PC-3 (cell line): ENCODE measurements at regions of chr1 and their contacts with region 1.

Region 1: GRCh38 chr1:150925816-150926741 is at the start of gene SETDB1:
- DNase-seq: peak; percentile 99
- ATAC-seq: peak; percentile 90
- H3K4me3 ChIP-seq: peak within 1 kb of the TSS; percentile 81
- H3K27ac ChIP-seq: peak within 1 kb of the TSS; percentile 71
- H3K4me1 ChIP-seq: peaks cover 15% of the 10 kb centered on the region
- H3K27me3 ChIP-seq: no peaks in the 10 kb centered on the region
- CTCF ChIP-seq: no peak
- total RNA-seq, gene SETDB1: 35.4 and 42.4 TPM in 2 replicates

Region 2: GRCh38 chr1:150561974-150562445 is 364.1 kb before region 1 on chr1:
- CTCF ChIA-PET with region 1: interaction called, 5 read pairs
- POLR2A ChIA-PET with region 1: interaction called, 3 read pairs
- intact Hi-C with region 1: loop called (anchors 5 kb)
- DNase-seq: peak; percentile 91
- ATAC-seq: peak; percentile 68
- H3K4me3 ChIP-seq: peak overlapping the region; percentile 69
- H3K27ac ChIP-seq: peak overlapping the region; percentile 96
- H3K4me1 ChIP-seq: peaks cover 37% of the 10 kb centered on the region
- H3K27me3 ChIP-seq: no peaks in the 10 kb centered on the region
- CTCF ChIP-seq: no peak

Region 3: DNA sequence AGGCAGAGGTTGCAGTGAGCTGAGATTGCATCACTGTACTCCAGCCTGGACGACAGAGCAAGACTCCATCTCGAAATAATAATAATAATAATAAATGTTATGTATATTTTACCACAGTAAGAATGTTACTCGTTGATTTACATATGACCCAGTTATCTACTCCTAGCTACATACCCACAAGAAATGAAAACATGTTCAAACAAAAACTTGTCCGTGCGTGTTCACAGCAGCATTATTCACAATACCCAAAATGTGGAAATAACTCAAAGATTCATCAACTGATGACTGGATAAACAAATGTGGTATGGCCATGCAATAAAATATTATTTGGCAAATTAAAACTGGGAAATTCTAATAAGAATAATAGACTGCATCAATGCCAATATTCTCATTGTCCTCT is 264.9 kb before region 1 on chr1:
- CTCF ChIA-PET with region 1: no interaction called
- POLR2A ChIA-PET with region 1: interaction called, 16 read pairs
- intact Hi-C with region 1: no loop called
- DNase-seq: no peak
- ATAC-seq: no peak
- H3K4me3 ChIP-seq: no peak overlapping the region
- H3K27ac ChIP-seq: no peak overlapping the region
- H3K4me1 ChIP-seq: no peaks in the 10 kb centered on the region
- H3K27me3 ChIP-seq: no peaks in the 10 kb centered on the region
- CTCF ChIP-seq: no peak

Region 4: DNA sequence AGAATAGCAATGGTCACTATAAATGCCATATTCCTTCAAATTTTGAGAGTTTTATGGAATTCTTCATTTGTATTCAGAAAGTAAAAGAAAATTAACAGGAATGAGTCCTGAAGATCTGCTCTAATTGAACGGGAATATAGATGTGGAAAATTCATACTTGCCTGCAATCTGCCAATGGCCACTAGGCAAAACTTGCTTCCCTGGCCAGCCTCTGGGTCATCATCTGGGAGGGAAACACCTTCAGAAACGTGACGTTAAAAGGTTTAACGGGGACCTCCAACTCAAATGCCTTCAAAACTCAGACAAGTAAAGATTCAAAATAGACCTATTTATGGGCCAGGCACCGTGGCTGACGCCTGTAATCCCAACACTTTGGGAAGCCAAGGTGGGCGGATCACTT is 96.3 kb before region 1 on chr1:
- CTCF ChIA-PET with region 1: no interaction called
- POLR2A ChIA-PET with region 1: no interaction called
- intact Hi-C with region 1: loop called (anchors 10 kb)
- DNase-seq: peak; percentile 18
- ATAC-seq: no peak
- H3K4me3 ChIP-seq: no peak overlapping the region
- H3K27ac ChIP-seq: no peak overlapping the region
- H3K4me1 ChIP-seq: no peaks in the 10 kb centered on the region
- H3K27me3 ChIP-seq: no peaks in the 10 kb centered on the region
- CTCF ChIP-seq: peak; percentile 55

Region 5: GRCh38 chr1:150979092-150980056 is 53.3 kb after region 1 on chr1:
- CTCF ChIA-PET with region 1: no interaction called
- POLR2A ChIA-PET with region 1: no interaction called
- intact Hi-C with region 1: loop called (anchors 2 kb)
- DNase-seq: peak; percentile 99
- ATAC-seq: peak; percentile 13
- H3K4me3 ChIP-seq: no peak overlapping the region
- H3K27ac ChIP-seq: no peak overlapping the region
- H3K4me1 ChIP-seq: peaks cover 42% of the 10 kb centered on the region
- H3K27me3 ChIP-seq: no peaks in the 10 kb centered on the region
- CTCF ChIP-seq: peak; percentile 100